Ascending aorta (tissue), 2 donors: ENCODE measurements at regions of chr6 and their contacts with region 1.

Region 1: DNA sequence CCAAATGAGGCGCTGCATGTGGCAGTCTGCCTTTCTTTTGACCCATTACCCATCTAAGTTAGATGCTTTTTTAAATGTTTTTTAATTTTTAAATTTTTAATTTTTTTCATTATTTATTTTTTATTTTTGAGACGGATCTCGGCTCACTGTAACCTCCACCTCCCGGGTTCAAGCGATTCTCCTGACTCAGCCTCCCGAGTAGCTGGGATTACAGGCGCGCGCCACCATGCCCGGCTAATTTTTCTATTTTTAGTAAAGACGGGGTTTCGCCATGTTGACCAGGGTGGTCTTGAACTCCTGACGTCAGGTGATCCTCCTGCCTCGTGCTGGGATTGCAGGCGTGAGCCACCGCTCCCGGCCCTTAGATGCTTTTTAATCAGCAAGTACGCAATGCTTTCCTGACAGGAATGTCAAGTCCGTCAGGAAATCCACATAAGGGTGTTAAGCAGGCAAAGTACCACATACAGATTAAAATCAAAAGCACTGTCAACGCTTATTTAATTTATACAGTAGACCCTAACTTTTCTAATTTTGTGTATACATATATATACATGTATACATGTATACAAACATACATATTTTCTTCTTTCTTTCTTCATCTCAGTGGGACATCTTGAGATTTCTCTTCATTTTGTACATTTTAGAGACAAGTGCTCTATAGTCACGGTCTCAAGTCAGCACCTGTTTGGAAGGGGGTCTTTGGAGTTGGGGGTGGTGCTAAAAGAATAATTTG is 995 bp upstream of the GSTA4 start:
- DNase-seq: peak in 1 of 2 donors; percentile 86
- H3K4me3 ChIP-seq: peak overlapping the region; percentile 26 to 95
- H3K27ac ChIP-seq: peak overlapping the region; percentile 94 to 96
- H3K4me1 ChIP-seq: peaks cover 0 to 24% of the 10 kb centered on the region in 2 donors
- H3K27me3 ChIP-seq: no peaks in the 10 kb centered on the region
- CTCF ChIP-seq: no peak

Region 2: DNA sequence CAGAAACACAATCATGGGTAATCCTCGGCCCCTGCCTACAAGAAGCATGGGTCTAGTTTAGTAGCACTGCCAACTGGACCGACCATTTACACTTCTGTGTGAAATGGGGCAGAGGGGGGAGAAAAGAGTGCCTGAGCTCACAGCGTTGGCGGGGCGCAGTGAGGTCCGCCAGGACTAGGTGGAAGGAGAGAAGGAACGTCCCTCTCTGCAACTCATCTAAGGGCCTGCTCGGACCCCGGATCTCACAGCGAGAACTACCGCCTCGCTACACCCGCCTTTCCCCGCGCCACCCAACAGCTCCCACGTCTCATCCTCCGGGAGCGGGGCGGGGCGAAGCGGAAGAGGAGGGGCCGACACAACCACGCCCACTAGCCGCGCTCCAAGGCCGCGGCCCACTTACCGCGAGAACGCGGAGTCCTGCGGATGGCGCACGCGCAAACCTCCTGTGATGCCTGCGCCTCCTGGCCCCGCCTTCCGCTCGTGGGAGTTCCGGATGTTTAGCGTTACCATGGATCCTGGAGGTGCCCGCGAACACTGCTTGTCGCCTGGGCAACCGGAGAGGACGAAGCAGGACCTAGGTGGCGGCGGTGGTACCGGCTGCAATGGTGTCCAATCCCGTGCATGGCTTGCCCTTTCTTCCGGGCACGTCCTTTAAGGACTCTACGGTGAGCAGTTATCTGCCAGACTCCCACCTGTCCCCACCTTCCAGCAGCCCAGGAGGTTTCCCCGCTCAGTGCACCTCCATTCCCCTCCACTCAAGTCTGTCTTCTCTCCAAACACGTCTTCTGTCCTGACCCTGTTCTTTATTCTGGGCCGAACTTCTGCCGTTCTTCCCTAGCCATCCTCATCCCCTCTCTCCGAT is 576.0 kb before region 1 on chr6 and contains the start of gene EFHC1:
- intact Hi-C with region 1: loop called (anchors 5 kb)
- DNase-seq: peak; percentile 96 to 99
- H3K4me3 ChIP-seq: peak within 1 kb of the TSS; percentile 71 to 95
- H3K27ac ChIP-seq: peak within 1 kb of the TSS; percentile 82 to 84
- H3K4me1 ChIP-seq: peaks cover 2 to 7% of the 10 kb centered on the region in 2 donors
- H3K27me3 ChIP-seq: no peaks in the 10 kb centered on the region
- CTCF ChIP-seq: no peak
- total RNA-seq, gene EFHC1: 7.3 TPM

Region 3: GRCh38 chr6:52577022-52577777 is 418.9 kb before region 1 on chr6 and contains the start of gene TRAM2:
- intact Hi-C with region 1: loop called (anchors 10 kb)
- DNase-seq: peak; percentile 16 to 89
- H3K4me3 ChIP-seq: peak within 1 kb of the TSS; percentile 82 to 88
- H3K27ac ChIP-seq: peak within 1 kb of the TSS; percentile 99 to 100
- H3K4me1 ChIP-seq: peaks cover 3 to 26% of the 10 kb centered on the region in 2 donors
- H3K27me3 ChIP-seq: no peaks in the 10 kb centered on the region
- CTCF ChIP-seq: no peak
- total RNA-seq, gene TRAM2: 32.6 TPM

Region 4: DNA sequence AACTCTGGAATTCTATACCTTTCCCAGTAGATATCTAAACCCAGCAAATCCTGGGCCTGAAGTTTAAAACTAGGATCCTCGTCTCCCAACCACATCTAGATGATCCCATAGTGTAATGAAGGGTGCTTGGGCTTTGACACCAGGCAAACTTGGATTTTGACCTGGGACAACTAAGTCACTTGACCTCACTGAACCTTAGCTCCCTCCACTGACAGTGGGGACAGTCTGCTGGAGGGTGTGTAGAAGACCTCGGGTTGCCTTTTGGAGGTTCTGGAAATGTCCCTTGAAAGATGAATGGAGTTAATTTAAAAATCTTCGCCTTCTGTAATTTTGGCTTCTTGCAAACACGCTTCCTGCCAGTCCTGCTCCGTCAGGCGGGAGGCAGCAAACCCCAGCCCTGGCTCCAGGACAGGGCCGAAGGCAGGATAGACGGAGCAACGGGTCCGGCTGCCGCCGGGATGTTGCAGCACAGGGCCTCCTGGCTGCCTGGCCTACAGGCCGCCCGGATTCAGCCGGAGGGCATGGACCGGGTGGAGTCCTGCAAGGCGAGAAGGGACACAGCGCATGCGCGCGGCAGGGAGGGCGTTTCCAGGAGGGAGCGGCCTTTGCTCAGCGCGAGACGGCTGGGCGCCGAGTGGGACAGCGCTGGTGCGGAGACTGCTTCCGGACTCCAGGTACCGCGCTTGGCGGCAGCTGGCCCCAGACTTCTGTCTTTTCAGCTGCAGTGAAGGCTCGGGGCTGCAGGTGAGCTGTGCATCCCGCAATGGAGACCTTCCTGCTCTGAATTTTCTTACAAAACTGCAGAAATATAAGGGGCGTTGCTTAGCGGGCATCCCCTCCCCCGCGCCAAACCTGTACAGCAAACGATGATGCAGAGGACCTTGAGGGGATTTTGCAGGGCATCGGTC is 325.3 kb before region 1 on chr6 and contains the start of gene TMEM14A:
- intact Hi-C with region 1: loop called (anchors 5 kb)
- DNase-seq: peak; percentile 53 to 95
- H3K4me3 ChIP-seq: peak within 1 kb of the TSS; percentile 82 to 86
- H3K27ac ChIP-seq: peak within 1 kb of the TSS; percentile 35 to 56
- H3K4me1 ChIP-seq: peaks cover 6 to 10% of the 10 kb centered on the region in 2 donors
- H3K27me3 ChIP-seq: no peaks in the 10 kb centered on the region
- CTCF ChIP-seq: peak in 1 of 3 experiments; percentile 15
- total RNA-seq, gene TMEM14A: 11.9 TPM

Region 5: GRCh38 chr6:52893803-52894649 is 102.1 kb before region 1 on chr6:
- intact Hi-C with region 1: no loop called
- DNase-seq: no peak
- H3K4me3 ChIP-seq: no peak overlapping the region
- H3K27ac ChIP-seq: no peak overlapping the region
- H3K4me1 ChIP-seq: no peaks in the 10 kb centered on the region
- H3K27me3 ChIP-seq: no peaks in the 10 kb centered on the region
- CTCF ChIP-seq: no peak

Region 6: GRCh38 chr6:52925047-52925446 is 71.0 kb before region 1 on chr6:
- intact Hi-C with region 1: no loop called
- DNase-seq: no peak
- H3K4me3 ChIP-seq: no peak overlapping the region
- H3K27ac ChIP-seq: no peak overlapping the region
- H3K4me1 ChIP-seq: no peaks in the 10 kb centered on the region
- H3K27me3 ChIP-seq: no peaks in the 10 kb centered on the region
- CTCF ChIP-seq: no peak

Region 7: DNA sequence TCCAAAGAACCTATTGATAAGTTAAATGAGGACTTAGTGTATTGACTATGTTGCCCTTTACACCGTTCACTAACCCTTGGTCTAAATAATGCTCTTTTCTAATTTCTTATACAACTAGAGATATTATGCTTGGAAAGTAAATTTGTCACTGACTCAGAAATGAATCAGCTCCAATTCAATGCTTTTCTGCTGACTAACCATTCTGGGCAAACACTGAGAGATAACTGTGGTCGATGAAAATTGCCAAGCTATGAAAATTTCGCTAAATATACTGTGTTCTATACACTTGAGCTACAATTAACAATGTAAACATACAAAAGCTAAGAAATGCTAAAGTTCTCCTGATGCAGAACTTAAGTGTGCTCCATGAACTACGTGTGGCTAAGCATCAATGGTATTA is 46.0 kb after region 1 on chr6:
- intact Hi-C with region 1: loop called (anchors 1 kb)
- DNase-seq: no peak
- H3K4me3 ChIP-seq: no peak overlapping the region
- H3K27ac ChIP-seq: peak overlapping the region; percentile 4 to 77
- H3K4me1 ChIP-seq: peaks cover 5 to 23% of the 10 kb centered on the region in 2 donors
- H3K27me3 ChIP-seq: no peaks in the 10 kb centered on the region
- CTCF ChIP-seq: no peak

Region 8: DNA sequence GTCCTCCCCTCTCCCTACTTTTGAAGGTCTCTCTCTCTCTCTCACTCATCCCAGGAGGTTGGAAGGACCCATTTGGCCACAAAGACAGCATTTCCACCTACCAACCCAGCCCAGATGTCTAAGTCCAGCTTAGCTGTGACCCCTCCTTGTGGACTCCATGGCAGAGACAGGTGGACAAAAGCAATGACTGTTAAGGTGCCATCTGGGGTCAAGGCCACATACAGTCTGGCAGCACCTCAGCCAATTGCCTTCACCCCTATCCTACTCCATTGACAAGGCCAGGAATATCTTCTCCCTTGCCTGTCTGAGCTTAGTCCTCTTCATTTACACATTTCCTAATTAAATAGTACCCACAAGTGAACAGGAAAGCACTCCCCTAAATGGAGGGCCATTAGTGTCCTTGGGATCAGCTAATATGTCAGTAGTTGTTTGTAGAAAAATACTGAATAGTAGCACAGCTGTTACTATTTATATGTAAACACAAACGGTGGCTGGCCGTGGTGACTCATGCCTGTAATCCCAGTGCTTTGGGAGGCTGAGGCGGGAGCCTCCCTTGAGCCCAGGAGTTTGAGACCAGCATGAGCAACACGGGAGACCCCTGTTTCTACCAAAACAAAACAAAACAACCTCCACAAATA is 123.8 kb after region 1 on chr6:
- intact Hi-C with region 1: no loop called
- DNase-seq: no peak
- H3K4me3 ChIP-seq: no peak overlapping the region
- H3K27ac ChIP-seq: no peak overlapping the region
- H3K4me1 ChIP-seq: no peaks in the 10 kb centered on the region
- H3K27me3 ChIP-seq: no peaks in the 10 kb centered on the region
- CTCF ChIP-seq: no peak

Region 9: GRCh38 chr6:53441035-53441493 is 445.0 kb after region 1 on chr6:
- intact Hi-C with region 1: loop called (anchors 10 kb)
- DNase-seq: no peak
- H3K4me3 ChIP-seq: no peak overlapping the region
- H3K27ac ChIP-seq: no peak overlapping the region
- H3K4me1 ChIP-seq: peaks cover 0 to 9% of the 10 kb centered on the region in 2 donors
- H3K27me3 ChIP-seq: no peaks in the 10 kb centered on the region
- CTCF ChIP-seq: no peak

Region 10: DNA sequence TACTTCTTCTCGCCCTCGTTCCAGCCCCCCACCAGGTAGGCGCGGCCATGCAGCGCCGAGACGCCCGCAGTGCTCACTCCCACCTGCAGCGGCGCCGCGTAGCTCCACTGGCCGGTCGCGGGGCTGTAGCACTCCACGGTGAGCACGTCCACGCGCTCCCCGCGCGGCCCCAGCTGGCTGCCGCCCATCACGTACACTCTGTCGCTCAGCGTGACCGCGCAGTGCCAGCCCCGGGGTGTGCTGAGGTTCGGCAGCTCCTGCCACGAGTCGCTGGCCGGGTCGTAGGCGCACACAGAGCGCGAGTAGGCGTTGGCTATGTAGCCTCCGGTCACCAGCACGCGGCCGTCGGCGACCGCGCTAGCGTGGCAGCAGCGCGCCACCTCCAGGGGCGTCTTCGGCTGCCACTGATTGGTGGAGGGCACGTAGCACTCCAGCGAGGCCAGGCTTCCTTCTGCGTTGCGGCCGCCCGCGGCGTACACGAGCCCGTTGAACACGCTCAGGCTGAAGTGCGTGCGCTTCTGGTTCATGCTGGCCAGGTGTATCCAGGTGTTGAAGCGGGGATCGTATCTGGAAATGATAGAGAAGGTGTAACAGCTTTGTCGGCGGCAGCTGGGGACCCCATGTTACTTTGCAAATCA is 655.8 kb after region 1 on chr6:
- intact Hi-C with region 1: loop called (anchors 10 kb)
- DNase-seq: peak; percentile 24 to 80
- H3K4me3 ChIP-seq: peak overlapping the region; percentile 71
- H3K27ac ChIP-seq: no peak overlapping the region
- H3K4me1 ChIP-seq: peaks cover 0 to 5% of the 10 kb centered on the region in 2 donors
- H3K27me3 ChIP-seq: no peaks in the 10 kb centered on the region
- CTCF ChIP-seq: peak; percentile 9 to 31 (median 26)